Adrenal gland (tissue), 19 donors: ENCODE measurements at regions of chr10 and their contacts with region 1.

Region 1: GRCh38 chr10:120423431-120424197 is 33.4 kb upstream of the PLPP4 start:
- DNase-seq: peak; percentile 21 to 55 (median 37)
- H3K4me3 ChIP-seq: no peak overlapping the region
- H3K27ac ChIP-seq: no peak overlapping the region
- H3K4me1 ChIP-seq: no peaks in the 10 kb centered on the region
- H3K27me3 ChIP-seq: no peaks in the 10 kb centered on the region
- CTCF ChIP-seq: peak; percentile 63 to 74 (median 71)
- POLR2A ChIP-seq: no peak

Region 2: GRCh38 chr10:120473593-120473992 is 50.0 kb after region 1 on chr10:
- intact Hi-C with region 1: no loop called
- DNase-seq: no peak
- H3K4me3 ChIP-seq: no peak overlapping the region
- H3K27ac ChIP-seq: no peak overlapping the region
- H3K4me1 ChIP-seq: no peaks in the 10 kb centered on the region
- H3K27me3 ChIP-seq: no peaks in the 10 kb centered on the region
- CTCF ChIP-seq: no peak
- POLR2A ChIP-seq: no peak

Region 3: DNA sequence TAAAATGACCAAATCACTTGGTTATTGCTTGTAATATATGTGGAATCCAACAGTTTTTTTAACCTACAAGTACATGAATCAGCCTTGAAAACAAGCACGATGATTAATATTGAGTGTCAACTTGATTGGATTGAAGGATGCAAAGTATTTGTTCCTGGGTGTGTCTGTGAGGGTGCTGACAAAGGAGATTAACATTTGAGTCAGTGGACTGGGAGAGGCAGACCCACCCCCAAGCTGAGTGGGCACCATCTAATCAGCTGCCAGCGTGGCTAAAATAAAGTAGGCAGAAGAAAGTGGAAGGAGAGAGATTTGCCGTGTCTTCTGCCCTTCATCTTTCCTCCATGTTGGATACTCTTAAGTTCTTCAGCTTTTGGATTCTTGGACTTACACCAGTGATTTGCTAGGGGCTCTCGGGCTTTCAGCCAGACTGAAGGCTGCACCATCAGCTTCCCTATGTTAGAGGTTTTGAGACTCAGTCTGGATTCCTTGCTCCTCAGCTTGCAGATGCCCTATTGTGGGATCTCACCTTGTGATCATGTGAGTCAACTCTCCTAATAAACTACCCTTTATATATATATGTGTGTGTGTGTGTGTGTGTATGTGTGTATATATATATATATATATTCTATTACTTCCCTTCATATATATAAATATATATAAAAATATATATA is 309.2 kb after region 1 on chr10:
- intact Hi-C with region 1: loop called in 1 of 2 experiments (anchors 5 kb)
- DNase-seq: no peak
- H3K4me3 ChIP-seq: no peak overlapping the region
- H3K27ac ChIP-seq: no peak overlapping the region
- H3K4me1 ChIP-seq: no peaks in the 10 kb centered on the region
- H3K27me3 ChIP-seq: no peaks in the 10 kb centered on the region
- CTCF ChIP-seq: no peak
- POLR2A ChIP-seq: no peak